Vagina (tissue), 2 donors: ENCODE measurements at regions of chr4 and their contacts with region 1.

Region 1: GRCh38 chr4:184282251-184282713 is 64.6 kb upstream of the ENPP6 start:
- DNase-seq: no peak
- H3K4me3 ChIP-seq: no peak overlapping the region
- H3K27ac ChIP-seq: no peak overlapping the region
- H3K4me1 ChIP-seq: peaks cover 14% of the 10 kb centered on the region
- H3K27me3 ChIP-seq: no peaks in the 10 kb centered on the region
- CTCF ChIP-seq: no peak
- POLR2A ChIP-seq: no peak

Region 2: DNA sequence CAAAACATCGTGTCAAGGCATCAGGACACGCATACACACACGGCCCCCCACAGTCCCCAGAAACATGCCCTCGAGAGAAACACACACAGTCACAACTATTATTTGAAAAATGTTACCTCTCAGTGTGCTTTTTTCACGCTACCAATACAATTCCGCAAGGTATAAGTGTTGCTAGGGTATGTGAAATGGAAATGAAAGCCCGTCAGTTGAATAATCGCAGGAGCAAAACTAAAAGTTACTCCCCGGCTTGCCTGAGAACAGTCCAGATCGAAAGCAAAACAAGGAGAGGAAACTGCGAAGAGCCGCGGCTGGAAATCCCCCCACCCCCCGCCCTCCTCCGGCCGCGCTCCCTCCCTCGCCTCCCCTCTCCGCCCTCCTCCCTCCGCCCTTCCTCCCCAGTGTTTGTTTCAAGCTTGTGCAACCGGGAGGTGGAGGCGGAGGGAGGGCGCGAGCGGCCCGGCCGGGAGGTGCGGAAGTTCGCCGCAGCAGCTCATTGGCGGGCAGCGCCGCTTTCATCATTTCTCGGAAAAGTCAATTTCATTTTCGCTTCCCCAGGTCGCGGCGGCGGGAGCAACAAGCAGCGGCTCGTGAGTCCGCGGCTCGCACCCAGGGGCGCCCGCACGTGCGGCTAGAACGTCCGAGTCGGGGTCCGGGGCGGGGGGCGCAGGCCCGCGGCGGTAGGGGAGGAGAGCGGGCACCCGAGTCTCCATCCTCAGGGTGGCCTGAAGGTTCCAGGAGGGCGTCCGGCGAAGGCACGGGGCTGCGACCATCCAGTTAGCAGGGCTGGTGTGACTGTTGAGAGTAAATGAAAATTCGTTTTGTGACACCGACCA is 192.2 kb after region 1 on chr4 and contains the start of gene IRF2:
- intact Hi-C with region 1: loop called (anchors 10 kb)
- DNase-seq: peak in 1 of 2 donors; percentile 98
- H3K4me3 ChIP-seq: peak within 1 kb of the TSS; percentile 77 to 95
- H3K27ac ChIP-seq: peak within 1 kb of the TSS; percentile 99
- H3K4me1 ChIP-seq: peaks cover 53% of the 10 kb centered on the region
- H3K27me3 ChIP-seq: no peaks in the 10 kb centered on the region
- CTCF ChIP-seq: peak in 1 of 3 experiments; percentile 21
- POLR2A ChIP-seq: peak in 1 of 2 donors; percentile 91
- total RNA-seq, gene IRF2: 18.7 TPM

Region 3: DNA sequence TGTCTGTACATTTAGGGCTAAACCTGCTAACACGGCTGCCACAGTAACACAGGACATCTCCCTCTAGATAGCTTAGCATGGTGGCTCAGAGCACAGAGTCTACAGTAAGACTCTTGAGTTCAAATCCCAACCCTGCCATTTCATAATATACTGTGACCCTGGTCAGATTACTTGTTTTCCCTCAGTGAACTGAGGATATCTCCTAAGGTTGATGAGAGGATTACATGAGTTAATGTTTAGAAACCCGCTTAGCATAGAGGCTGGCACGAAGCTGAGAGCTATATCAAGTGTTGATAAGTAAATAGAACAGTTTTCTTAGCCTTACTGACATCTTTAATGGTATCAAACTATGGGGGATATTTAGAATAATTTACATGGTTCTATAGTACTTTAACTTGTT is 329.8 kb after region 1 on chr4:
- intact Hi-C with region 1: no loop called
- DNase-seq: no peak
- H3K4me3 ChIP-seq: no peak overlapping the region
- H3K27ac ChIP-seq: no peak overlapping the region
- H3K4me1 ChIP-seq: no peaks in the 10 kb centered on the region
- H3K27me3 ChIP-seq: no peaks in the 10 kb centered on the region
- CTCF ChIP-seq: no peak
- POLR2A ChIP-seq: no peak